ENCODE measurements at regions of chr6 and their contacts with region 1.

Region 1: GRCh38 chr6:54717849-54718455 is 128.6 kb upstream of the FAM83B start:
- ATAC-seq: peak in 4 of 8 experiments; percentile 24 to 61 (median 46)
- H3K4me3 ChIP-seq: no peak overlapping the region
- H3K27ac ChIP-seq: no peak overlapping the region
- H3K4me1 ChIP-seq: peaks cover 0 to 3% of the 10 kb centered on the region in 2 donors

Region 2: GRCh38 chr6:54813892-54814291 is 95.9 kb after region 1 on chr6:
- in situ Hi-C with region 1: no loop called
- ATAC-seq: peak in 2 of 8 experiments; percentile 60 to 62
- H3K4me3 ChIP-seq: no peak overlapping the region
- H3K27ac ChIP-seq: no peak overlapping the region
- H3K4me1 ChIP-seq: no peaks in the 10 kb centered on the region

Region 3: GRCh38 chr6:55069132-55069781 is 351.3 kb after region 1 on chr6:
- in situ Hi-C with region 1: loop called in 2 of 9 experiments (anchors 25 kb)
- ATAC-seq: peak in 4 of 8 experiments; percentile 22 to 51 (median 30)
- H3K4me3 ChIP-seq: no peak overlapping the region
- H3K27ac ChIP-seq: no peak overlapping the region
- H3K4me1 ChIP-seq: no peaks in the 10 kb centered on the region

Region 4: DNA sequence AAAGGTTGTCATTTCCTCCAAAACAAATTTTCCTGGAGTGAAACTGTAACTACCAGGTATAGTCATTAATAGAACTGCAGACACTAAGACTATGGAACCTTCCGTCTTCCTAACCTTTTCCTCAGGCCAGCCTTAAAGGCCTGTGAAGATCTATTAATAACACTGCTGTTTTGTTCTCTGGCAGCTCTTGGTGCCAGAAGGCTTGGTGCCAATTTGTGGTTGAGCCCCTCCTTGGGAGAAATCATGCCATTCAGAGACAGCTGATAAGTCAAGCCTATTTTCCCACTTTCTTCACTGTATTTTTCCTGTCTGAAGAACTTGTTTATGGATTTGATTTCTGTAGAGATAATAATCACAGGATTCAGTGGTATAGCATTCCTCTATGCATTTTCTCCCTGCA is 521.1 kb after region 1 on chr6:
- in situ Hi-C with region 1: loop called in 2 of 9 experiments (anchors 25 kb)
- ATAC-seq: no peak
- H3K4me3 ChIP-seq: no peak overlapping the region
- H3K27ac ChIP-seq: no peak overlapping the region
- H3K4me1 ChIP-seq: no peaks in the 10 kb centered on the region

Measured in motor neuron (in vitro differentiated cells).